ENCODE measurements at regions of chr11 and their contacts with region 1.

Region 1: DNA sequence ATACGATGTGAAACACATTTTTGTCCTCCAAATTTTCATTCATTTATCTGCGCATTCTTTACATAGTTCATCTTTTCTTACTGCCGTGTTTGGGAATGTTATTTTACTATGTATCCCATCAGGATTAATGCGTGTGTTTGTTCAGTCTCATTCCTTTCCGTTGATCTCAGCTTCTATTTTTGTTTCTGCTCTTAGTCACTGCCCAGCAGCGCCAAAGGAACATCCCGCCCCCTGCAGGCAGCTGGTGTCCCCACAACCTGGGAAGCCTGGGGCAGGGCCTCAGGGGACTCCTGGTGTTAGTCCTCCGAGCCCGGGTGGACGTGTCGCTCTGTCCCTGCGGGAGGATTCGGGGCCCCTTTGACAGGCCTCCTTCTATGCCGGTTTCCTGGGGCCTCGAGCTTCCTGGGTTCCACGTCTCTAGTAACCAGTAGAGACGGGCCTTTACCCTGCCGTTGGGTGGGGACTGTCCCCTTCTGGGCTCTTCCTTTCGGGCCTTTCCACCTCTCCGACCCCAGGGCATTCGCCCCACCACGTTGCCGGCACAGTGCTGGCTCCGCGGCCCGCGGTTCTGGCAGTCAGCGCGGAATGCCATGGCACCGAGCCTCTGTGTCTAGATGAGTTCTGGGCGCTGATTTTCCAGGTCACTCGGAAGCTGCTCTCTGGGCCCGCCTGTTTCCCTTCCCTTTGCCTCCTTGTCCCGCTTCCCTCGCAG is 39.8 kb downstream of the WEE1 start:
- DNase-seq: peak; percentile 63 to 88 (median 76)
- ATAC-seq: peak; percentile 70
- H3K4me3 ChIP-seq: peak overlapping the region; percentile 71
- H3K4me3 Mint-ChIP-seq: peak overlapping the region; percentile 94 to 99 (median 96)
- H3K27ac ChIP-seq: peak overlapping the region; percentile 75
- H3K27ac Mint-ChIP-seq: peak overlapping the region; percentile 82 to 98 (median 92)
- H3K4me1 ChIP-seq: peaks cover 0 to 14% of the 10 kb centered on the region in 2 donors
- H3K4me1 Mint-ChIP-seq: peaks cover 9 to 34% (median 18%) of the 10 kb centered on the region in 7 donors
- H3K27me3 ChIP-seq: no peaks in the 10 kb centered on the region
- H3K27me3 Mint-ChIP-seq: no peaks in the 10 kb centered on the region

Region 2: DNA sequence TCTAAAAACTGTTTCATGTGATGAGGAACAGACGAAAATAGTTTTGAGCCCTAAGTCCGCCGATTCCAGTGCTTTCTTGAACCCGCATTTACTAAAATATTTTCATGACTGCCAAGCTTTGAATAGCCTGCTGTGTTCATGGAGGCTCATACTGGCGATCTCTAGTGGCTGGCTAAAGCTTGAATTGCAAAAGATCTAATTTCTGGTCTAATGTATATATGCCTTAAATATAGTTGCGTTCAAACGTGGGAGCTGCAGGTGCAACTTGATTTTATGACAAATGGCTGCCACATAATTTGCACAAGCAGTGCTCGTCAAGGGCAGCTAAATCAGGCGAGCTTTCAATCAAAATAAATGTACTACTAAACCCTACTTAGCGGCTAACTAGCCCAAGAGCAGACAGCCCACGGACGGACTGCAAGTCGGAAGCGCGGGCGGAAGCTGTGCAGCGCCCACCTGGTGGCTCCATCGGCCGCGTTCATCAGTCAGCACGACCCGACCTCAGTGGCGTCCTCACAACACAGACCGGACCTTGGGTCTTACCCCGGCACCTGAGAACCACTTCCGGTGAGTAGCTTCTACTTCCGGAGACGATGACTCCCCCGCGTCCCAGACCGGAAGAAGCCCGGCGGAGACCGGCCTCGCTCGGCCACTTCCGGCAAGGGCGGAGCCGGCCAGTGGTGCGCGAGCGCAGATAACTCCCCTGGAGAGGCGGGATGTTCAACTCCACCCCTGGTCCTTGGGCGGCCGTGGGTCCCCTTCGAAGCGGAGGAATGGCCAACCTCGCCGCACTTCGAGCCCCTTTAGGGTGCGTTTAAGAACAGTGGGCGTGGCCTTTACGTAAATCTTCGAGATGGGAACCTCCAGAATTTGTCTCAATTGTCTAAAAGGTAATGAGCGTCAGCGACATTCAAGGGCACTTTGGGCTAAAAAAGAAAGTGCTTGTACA is 924.6 kb before region 1 on chr11:
- CTCF ChIA-PET with region 1: no interaction called
- POLR2A ChIA-PET with region 1: no interaction called
- intact Hi-C with region 1: loop called in 1 of 2 experiments (anchors 2 kb)
- DNase-seq: peak; percentile 50 to 86 (median 61)
- ATAC-seq: peak; percentile 92
- H3K4me3 ChIP-seq: peak overlapping the region; percentile 80
- H3K4me3 Mint-ChIP-seq: peak overlapping the region; percentile 89 to 99 (median 96)
- H3K27ac ChIP-seq: peak overlapping the region; percentile 85
- H3K27ac Mint-ChIP-seq: peak overlapping the region; percentile 90 to 99 (median 96)
- H3K4me1 ChIP-seq: peaks cover 15 to 17% of the 10 kb centered on the region in 2 donors
- H3K4me1 Mint-ChIP-seq: peaks cover 20 to 63% (median 45%) of the 10 kb centered on the region in 7 donors
- H3K27me3 ChIP-seq: no peaks in the 10 kb centered on the region
- H3K27me3 Mint-ChIP-seq: no peaks in the 10 kb centered on the region

Region 3: DNA sequence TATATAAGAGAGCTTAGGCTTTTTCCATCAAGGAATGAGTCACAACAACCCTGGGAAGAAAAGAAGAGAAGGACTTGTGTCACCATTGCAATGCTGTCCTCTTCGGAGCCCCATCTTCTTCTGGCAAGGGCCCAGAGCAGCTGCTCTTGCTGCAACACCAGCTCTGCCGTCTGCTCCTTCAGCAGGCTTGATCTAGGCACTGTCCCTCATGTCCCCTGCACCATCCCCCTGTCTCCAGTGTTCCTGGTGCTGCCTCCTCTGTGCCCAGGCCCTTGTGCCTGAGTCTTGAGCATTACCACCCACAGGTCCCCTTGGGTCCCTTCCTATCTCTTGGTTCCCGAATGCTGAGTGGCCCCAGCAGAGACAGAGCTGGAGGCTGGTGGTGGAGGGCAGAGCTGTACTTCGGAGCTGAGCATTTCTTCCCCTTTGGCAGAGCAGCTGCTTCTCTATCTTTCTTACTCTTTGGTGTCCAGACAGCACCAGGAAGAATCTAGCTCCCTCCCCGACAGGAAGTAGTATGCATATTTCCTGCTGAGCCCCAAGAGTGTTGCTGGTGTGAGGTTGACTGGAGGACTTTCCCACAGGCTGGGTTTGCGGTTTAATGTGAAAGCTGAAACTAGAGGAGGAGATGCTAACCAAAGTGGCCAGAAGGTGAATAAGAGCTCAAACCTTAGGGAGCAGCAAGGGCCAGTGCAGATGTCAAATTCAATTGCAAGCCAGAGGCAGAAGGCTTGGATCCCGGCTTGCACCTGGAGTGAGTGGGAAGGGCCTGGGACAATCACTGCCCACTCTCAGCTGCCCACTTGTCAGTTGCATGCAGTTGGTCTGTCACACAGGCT is 12.0 kb before region 1 on chr11:
- CTCF ChIA-PET with region 1: interaction called, 25 read pairs
- POLR2A ChIA-PET with region 1: interaction called, 6 read pairs
- intact Hi-C with region 1: loop called (anchors 1 kb)
- DNase-seq: peak in 8 of 9 donors; percentile 8 to 72 (median 28)
- ATAC-seq: peak; percentile 89
- H3K4me3 ChIP-seq: peak overlapping the region; percentile 30
- H3K4me3 Mint-ChIP-seq: peak overlapping the region; percentile 53 to 87 (median 72)
- H3K27ac ChIP-seq: peak overlapping the region; percentile 63
- H3K27ac Mint-ChIP-seq: peak overlapping the region; percentile 71 to 92 (median 87)
- H3K4me1 ChIP-seq: peaks cover 16 to 18% of the 10 kb centered on the region in 2 donors
- H3K4me1 Mint-ChIP-seq: peaks cover 15 to 33% (median 20%) of the 10 kb centered on the region in 7 donors
- H3K27me3 ChIP-seq: no peaks in the 10 kb centered on the region
- H3K27me3 Mint-ChIP-seq: no peaks in the 10 kb centered on the region

Region 4: GRCh38 chr11:9748361-9748970 is 135.2 kb after region 1 on chr11:
- CTCF ChIA-PET with region 1: interaction called, 5 read pairs
- POLR2A ChIA-PET with region 1: interaction called, 4 read pairs
- intact Hi-C with region 1: loop called (anchors 1 kb)
- DNase-seq: peak in 8 of 9 donors; percentile 41 to 68 (median 60)
- ATAC-seq: peak; percentile 98
- H3K4me3 ChIP-seq: no peak overlapping the region
- H3K4me3 Mint-ChIP-seq: no peak overlapping the region
- H3K27ac ChIP-seq: no peak overlapping the region
- H3K27ac Mint-ChIP-seq: peak overlapping the region in 2 of 9 donors; percentile 28 to 46
- H3K4me1 ChIP-seq: no peaks in the 10 kb centered on the region
- H3K4me1 Mint-ChIP-seq: peaks cover 0 to 18% (median 0%) of the 10 kb centered on the region in 7 donors
- H3K27me3 ChIP-seq: no peaks in the 10 kb centered on the region
- H3K27me3 Mint-ChIP-seq: peaks cover 0 to 4% (median 0%) of the 10 kb centered on the region in 5 donors

Region 5: DNA sequence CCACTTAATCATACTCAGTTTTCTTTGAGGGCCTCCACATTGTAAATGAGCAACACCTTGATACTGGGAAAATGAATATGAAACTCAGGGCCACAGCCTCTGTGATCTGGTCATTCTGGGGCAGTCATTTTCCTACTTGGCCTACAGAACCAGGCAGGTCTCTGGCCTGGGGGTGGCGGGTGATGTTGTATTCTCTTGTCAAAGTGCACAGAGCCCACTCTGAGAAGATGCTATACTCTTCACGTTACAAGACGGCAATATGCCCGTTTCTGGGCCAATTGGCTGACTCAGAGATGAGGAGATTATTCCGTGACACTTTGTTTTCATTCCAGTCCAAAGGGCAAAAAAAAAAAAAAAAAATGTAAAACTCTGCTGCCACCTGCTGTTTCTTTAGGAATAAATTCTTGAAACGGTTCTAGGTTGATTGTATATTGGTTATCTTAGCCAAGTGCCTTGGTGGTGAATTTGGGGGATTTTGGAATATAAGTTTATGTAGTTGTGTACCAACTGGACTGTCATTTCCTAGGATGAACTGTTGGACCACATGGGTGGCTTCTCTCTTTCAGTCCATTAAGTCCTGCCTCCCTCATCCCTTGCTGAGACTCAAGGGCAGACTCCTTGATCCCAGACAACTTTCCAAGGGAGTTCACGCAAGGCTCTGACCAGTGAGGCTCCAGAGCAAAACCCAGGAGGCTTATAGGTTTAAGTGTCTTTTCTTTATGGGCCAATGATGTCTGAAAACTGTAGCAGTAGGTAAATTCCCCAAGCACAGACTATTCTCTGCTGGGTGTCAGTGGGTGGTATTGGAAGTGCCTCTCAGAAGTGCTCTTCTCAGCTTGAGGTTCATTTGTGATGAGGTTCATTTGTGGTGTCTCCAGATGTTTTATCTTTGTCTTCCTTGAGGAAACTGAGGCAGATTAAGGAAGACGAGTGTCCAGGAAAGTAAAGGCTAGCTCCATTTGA is 709.8 kb after region 1 on chr11:
- CTCF ChIA-PET with region 1: no interaction called
- POLR2A ChIA-PET with region 1: no interaction called
- intact Hi-C with region 1: loop called (anchors 1 to 5 kb)
- DNase-seq: peak in 8 of 9 donors; percentile 10 to 70 (median 48)
- ATAC-seq: peak; percentile 70
- H3K4me3 ChIP-seq: no peak overlapping the region
- H3K4me3 Mint-ChIP-seq: peak overlapping the region in 1 of 10 donors; percentile 26
- H3K27ac ChIP-seq: no peak overlapping the region
- H3K27ac Mint-ChIP-seq: peak overlapping the region in 5 of 9 donors; percentile 16 to 82 (median 55)
- H3K4me1 ChIP-seq: no peaks in the 10 kb centered on the region
- H3K4me1 Mint-ChIP-seq: peaks cover 0 to 11% (median 3%) of the 10 kb centered on the region in 7 donors
- H3K27me3 ChIP-seq: no peaks in the 10 kb centered on the region
- H3K27me3 Mint-ChIP-seq: peaks cover 4 to 20% (median 8%) of the 10 kb centered on the region in 5 donors